ENCODE measurements at regions of chr1 and their contacts with region 1.

Region 1: DNA sequence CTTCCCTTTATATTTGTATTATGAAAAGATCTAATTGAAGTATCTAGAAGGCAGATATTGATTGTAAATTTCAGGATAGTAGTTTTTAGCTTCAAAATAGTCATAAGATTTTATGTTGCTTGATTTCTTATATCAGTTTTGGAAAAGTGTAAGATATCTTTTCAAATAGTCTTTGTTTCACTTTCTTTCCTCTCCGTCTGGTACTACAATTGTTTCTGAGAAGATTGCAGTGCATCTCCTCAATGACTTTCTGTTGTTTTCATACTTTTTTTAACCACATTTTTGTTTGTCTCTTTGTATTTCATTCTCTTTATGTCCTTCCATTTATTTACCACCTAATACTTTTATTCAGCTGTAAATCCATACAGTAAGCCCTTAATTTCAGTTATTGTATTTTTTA is 964.6 kb upstream of the B3GALT2 start:
- DNase-seq: no peak
- ATAC-seq: no peak
- H3K4me3 ChIP-seq: peak overlapping the region; percentile 30
- H3K4me3 Mint-ChIP-seq: peak overlapping the region in 9 of 10 donors; percentile 68 to 89 (median 77)
- H3K27ac ChIP-seq: no peak overlapping the region
- H3K27ac Mint-ChIP-seq: peak overlapping the region in 8 of 9 donors; percentile 5 to 89 (median 63)
- H3K4me1 ChIP-seq: peaks cover 0 to 4% of the 10 kb centered on the region in 2 donors
- H3K4me1 Mint-ChIP-seq: peaks cover 2 to 22% (median 17%) of the 10 kb centered on the region in 7 donors
- H3K27me3 ChIP-seq: no peaks in the 10 kb centered on the region
- H3K27me3 Mint-ChIP-seq: no peaks in the 10 kb centered on the region

Region 2: GRCh38 chr1:194133163-194133562 is 17.9 kb before region 1 on chr1:
- CTCF ChIA-PET with region 1: no interaction called
- POLR2A ChIA-PET with region 1: no interaction called
- intact Hi-C with region 1: loop called in 1 of 2 experiments (anchors 2 kb)
- DNase-seq: no peak
- ATAC-seq: no peak
- H3K4me3 ChIP-seq: no peak overlapping the region
- H3K4me3 Mint-ChIP-seq: no peak overlapping the region
- H3K27ac ChIP-seq: no peak overlapping the region
- H3K27ac Mint-ChIP-seq: peak overlapping the region in 2 of 9 donors; percentile 42 to 61
- H3K4me1 ChIP-seq: no peaks in the 10 kb centered on the region
- H3K4me1 Mint-ChIP-seq: peaks cover 5 to 23% (median 13%) of the 10 kb centered on the region in 7 donors
- H3K27me3 ChIP-seq: no peaks in the 10 kb centered on the region
- H3K27me3 Mint-ChIP-seq: no peaks in the 10 kb centered on the region

Measured in naive thymus-derived CD4-positive, alpha-beta T cell (primary cell).